ENCODE measurements at regions of chr13 and their contacts with region 1.

Region 1: DNA sequence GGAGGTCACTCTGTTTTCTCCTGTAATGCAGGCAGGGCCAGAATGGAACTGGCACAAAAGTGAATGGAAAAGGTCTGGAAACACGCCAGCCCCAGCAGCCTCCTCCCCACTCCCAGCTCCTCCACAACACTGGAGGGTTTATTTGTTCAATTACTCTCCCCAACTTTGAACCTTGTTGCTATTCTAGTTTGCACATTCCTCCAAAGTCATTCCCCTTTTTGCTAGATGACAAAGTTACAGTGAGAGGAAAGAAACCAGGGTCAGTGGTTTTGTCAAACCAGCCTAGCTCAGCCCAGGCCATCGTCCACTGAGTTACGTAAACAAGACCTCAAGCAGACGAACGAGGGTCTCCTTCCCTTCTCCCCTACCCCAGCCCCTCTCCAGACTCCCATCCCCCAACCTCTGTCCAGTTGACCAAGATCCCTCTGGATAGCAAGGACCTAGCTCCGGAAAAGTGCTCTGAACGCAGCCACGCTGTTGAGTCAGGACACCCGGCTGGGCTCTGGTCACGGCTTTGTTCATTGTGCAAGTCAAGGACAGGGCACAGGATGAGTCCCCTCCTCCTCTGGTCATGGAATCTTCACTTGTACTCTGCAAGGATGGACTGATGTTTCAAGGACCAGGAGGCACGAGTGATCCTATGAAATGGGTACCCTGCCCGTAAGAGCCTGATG is 180.0 kb downstream of the USP12 start:
- DNase-seq: peak; percentile 53
- ATAC-seq: no peak; the same call in 1 of the 2 replicates
- H3K4me3 ChIP-seq: no peak overlapping the region
- H3K27ac ChIP-seq: no peak overlapping the region
- H3K4me1 ChIP-seq: peaks cover 8% of the 10 kb centered on the region; the same call in 1 of the 2 replicates
- H3K27me3 ChIP-seq: no peaks in the 10 kb centered on the region
- CTCF ChIP-seq: no peak

Region 2: GRCh38 chr13:27006519-27007161 is 15.0 kb after region 1 on chr13:
- CTCF ChIA-PET with region 1: no interaction called
- POLR2A ChIA-PET with region 1: no interaction called
- intact Hi-C with region 1: loop called (anchors 1 kb)
- DNase-seq: peak; percentile 12
- ATAC-seq: peak; percentile 88
- H3K4me3 ChIP-seq: peak overlapping the region; percentile 61
- H3K27ac ChIP-seq: no peak overlapping the region
- H3K4me1 ChIP-seq: no peaks in the 10 kb centered on the region
- H3K27me3 ChIP-seq: no peaks in the 10 kb centered on the region
- CTCF ChIP-seq: no peak